CD8-positive, alpha-beta T cell (primary cell): ENCODE measurements at regions of chr1 and their contacts with region 1.

Region 1: DNA sequence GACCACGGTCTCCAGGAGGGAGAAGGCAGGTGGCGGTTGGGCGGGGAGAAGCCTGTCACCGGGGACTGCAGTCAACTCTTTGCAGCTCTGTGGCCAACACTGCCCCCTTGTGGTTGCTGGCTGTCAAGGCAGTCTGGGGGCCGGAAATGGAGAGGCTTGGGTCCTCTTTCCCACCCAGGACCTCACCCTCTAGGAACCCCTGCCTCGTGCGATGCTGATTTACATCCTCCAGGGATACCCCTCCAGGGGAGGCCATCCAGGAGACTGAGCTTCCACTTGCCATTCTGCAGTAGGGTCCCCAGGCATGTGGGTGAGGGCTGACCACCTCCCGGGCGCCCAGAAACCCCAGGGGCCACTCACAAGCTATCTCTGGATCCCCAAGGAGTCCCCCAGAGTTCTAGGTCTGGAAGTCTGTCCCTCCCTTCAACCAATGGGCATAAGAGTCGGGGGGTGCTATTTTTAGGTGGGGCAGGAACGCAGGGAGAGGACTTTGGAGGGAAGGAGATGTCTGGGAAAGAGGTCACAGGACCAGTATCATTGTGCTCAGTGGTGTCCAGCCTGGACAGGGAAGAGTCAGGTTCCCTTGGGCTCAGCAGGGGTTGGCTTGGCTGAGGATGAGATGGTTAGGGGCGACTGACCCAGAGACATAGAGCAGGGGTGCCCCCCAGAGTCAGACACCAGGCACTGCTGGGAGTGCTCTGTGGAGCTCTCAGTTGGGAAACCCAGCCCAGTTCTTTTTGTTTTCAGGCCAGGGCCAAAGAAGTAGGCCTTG is 7.1 kb upstream of the GPR61 start:
- DNase-seq: peak; percentile 83 to 97 (median 91)
- ATAC-seq: peak; percentile 90
- H3K4me3 ChIP-seq: peak overlapping the region; percentile 42 to 57
- H3K4me3 Mint-ChIP-seq: peak overlapping the region; percentile 80
- H3K27ac ChIP-seq: peak overlapping the region; percentile 17 to 52
- H3K27ac Mint-ChIP-seq: peak overlapping the region; percentile 67
- H3K4me1 ChIP-seq: peaks cover 31% of the 10 kb centered on the region
- H3K4me1 Mint-ChIP-seq: peaks cover 31% of the 10 kb centered on the region
- H3K27me3 ChIP-seq: no peaks in the 10 kb centered on the region
- H3K27me3 Mint-ChIP-seq: no peaks in the 10 kb centered on the region
- CTCF ChIP-seq: peak; percentile 88

Region 2: DNA sequence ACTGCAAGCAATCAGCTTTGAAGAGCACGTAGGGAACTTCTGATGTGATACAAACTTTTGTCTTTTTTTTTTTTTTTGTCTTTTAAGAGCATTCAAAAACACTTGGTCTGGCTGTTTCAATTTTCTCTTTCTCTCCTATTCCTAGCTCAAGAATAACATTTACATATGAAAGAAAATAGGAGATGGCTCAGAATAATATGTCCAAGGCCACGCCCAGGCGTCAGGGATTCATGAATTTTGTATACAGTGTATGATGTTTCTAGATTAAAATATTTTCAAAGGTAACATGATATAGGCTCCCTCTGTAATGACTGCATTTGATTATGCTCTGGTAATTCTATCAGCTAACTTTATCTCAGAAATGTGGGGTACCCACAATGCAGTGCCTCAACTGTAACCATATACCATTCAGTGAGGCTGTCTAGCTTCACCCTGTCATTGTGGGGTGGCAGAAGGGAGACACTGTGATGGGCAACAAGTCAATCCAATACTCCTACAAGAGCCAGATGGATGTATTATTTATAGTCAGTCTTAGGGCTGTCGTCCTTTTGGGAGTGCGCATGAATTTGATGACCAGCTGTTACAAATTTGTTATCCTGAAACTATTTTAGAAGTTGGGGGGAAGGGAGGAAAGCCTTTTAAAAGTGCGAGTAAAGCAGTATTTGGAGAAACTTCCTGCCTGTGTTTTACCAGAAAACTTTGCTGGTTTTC is 674.2 kb before region 1 on chr1:
- CTCF ChIA-PET with region 1: no interaction called
- POLR2A ChIA-PET with region 1: no interaction called
- intact Hi-C with region 1: no loop called
- DNase-seq: no peak
- ATAC-seq: no peak
- H3K4me3 ChIP-seq: no peak overlapping the region
- H3K4me3 Mint-ChIP-seq: no peak overlapping the region
- H3K27ac ChIP-seq: no peak overlapping the region
- H3K27ac Mint-ChIP-seq: no peak overlapping the region
- H3K4me1 ChIP-seq: no peaks in the 10 kb centered on the region
- H3K4me1 Mint-ChIP-seq: peaks cover 5% of the 10 kb centered on the region
- H3K27me3 ChIP-seq: peaks cover 0 to 4% of the 10 kb centered on the region in 2 experiments
- H3K27me3 Mint-ChIP-seq: peaks cover 13% of the 10 kb centered on the region
- CTCF ChIP-seq: no peak

Region 3: GRCh38 chr1:109112652-109113285 is 419.8 kb before region 1 on chr1:
- CTCF ChIA-PET with region 1: no interaction called
- POLR2A ChIA-PET with region 1: no interaction called
- intact Hi-C with region 1: loop called in 1 of 2 experiments (anchors 5 kb)
- DNase-seq: peak; percentile 81 to 94 (median 89)
- ATAC-seq: peak; percentile 56
- H3K4me3 ChIP-seq: peak overlapping the region; percentile 46 to 66
- H3K4me3 Mint-ChIP-seq: peak overlapping the region; percentile 83
- H3K27ac ChIP-seq: peak overlapping the region; percentile 34 to 48
- H3K27ac Mint-ChIP-seq: peak overlapping the region; percentile 81
- H3K4me1 ChIP-seq: peaks cover 22% of the 10 kb centered on the region
- H3K4me1 Mint-ChIP-seq: peaks cover 29% of the 10 kb centered on the region
- H3K27me3 ChIP-seq: peaks cover 0 to 4% of the 10 kb centered on the region in 2 experiments
- H3K27me3 Mint-ChIP-seq: peaks cover 2% of the 10 kb centered on the region
- CTCF ChIP-seq: peak; percentile 90

Region 4: GRCh38 chr1:109277434-109278204 is 254.9 kb before region 1 on chr1:
- CTCF ChIA-PET with region 1: interaction called, 50 read pairs
- POLR2A ChIA-PET with region 1: interaction called, 5 read pairs
- intact Hi-C with region 1: loop called in 1 of 2 experiments (anchors 1 kb)
- DNase-seq: peak in 8 of 9 experiments; percentile 31 to 74 (median 64)
- ATAC-seq: peak; percentile 75
- H3K4me3 ChIP-seq: no peak overlapping the region
- H3K4me3 Mint-ChIP-seq: no peak overlapping the region
- H3K27ac ChIP-seq: no peak overlapping the region
- H3K27ac Mint-ChIP-seq: no peak overlapping the region
- H3K4me1 ChIP-seq: peaks cover 8% of the 10 kb centered on the region
- H3K4me1 Mint-ChIP-seq: peaks cover 7% of the 10 kb centered on the region
- H3K27me3 ChIP-seq: no peaks in the 10 kb centered on the region
- H3K27me3 Mint-ChIP-seq: no peaks in the 10 kb centered on the region
- CTCF ChIP-seq: peak; percentile 79

Region 5: GRCh38 chr1:109404838-109405237 is 127.7 kb before region 1 on chr1:
- CTCF ChIA-PET with region 1: interaction called, 17 read pairs
- POLR2A ChIA-PET with region 1: no interaction called
- intact Hi-C with region 1: no loop called
- DNase-seq: peak in 2 of 9 experiments; percentile 18 to 48
- ATAC-seq: peak; percentile 42
- H3K4me3 ChIP-seq: no peak overlapping the region
- H3K4me3 Mint-ChIP-seq: no peak overlapping the region
- H3K27ac ChIP-seq: peak overlapping the region; percentile 18 to 45
- H3K27ac Mint-ChIP-seq: peak overlapping the region; percentile 58
- H3K4me1 ChIP-seq: peaks cover 4% of the 10 kb centered on the region
- H3K4me1 Mint-ChIP-seq: peaks cover 16% of the 10 kb centered on the region
- H3K27me3 ChIP-seq: no peaks in the 10 kb centered on the region
- H3K27me3 Mint-ChIP-seq: no peaks in the 10 kb centered on the region
- CTCF ChIP-seq: no peak

Region 6: GRCh38 chr1:109493805-109494539 is 38.6 kb before region 1 on chr1 and contains the start of gene CYB561D1:
- CTCF ChIA-PET with region 1: interaction called, 1,903 read pairs
- POLR2A ChIA-PET with region 1: interaction called, 132 read pairs
- intact Hi-C with region 1: loop called (anchors 1 kb)
- DNase-seq: peak; percentile 79 to 95 (median 88)
- ATAC-seq: peak; percentile 90
- H3K4me3 ChIP-seq: peak within 1 kb of the TSS; percentile 94 to 95
- H3K4me3 Mint-ChIP-seq: peak within 1 kb of the TSS; percentile 95
- H3K27ac ChIP-seq: peak within 1 kb of the TSS; percentile 53 to 58
- H3K27ac Mint-ChIP-seq: peak within 1 kb of the TSS; percentile 85
- H3K4me1 ChIP-seq: peaks cover 49% of the 10 kb centered on the region
- H3K4me1 Mint-ChIP-seq: peaks cover 52% of the 10 kb centered on the region
- H3K27me3 ChIP-seq: no peaks in the 10 kb centered on the region
- H3K27me3 Mint-ChIP-seq: no peaks in the 10 kb centered on the region
- CTCF ChIP-seq: peak; percentile 88
- total RNA-seq, gene CYB561D1: 10.2 to 12.3 TPM

Region 7: DNA sequence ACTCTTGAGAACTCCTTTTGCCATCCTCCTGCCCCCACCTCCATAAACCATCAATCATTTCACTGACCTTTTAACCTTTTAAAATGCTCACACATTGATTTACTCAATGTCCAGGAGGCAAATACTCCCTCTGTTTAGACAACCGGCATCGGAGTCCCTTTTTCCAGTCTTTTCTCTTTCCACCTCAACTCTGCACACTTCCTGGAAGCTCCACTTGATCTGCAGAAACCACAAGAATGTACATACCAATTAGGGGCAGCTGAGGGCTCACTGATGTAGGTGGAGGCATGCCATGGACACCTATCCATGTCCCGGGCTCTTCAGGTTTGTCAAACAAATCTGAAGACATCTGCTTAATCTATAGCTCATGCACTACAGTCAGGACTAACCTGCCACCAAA is 17.7 kb before region 1 on chr1:
- CTCF ChIA-PET with region 1: interaction called, 1,903 read pairs
- POLR2A ChIA-PET with region 1: interaction called, 22 read pairs
- intact Hi-C with region 1: loop called in 1 of 2 experiments (anchors 1 kb)
- DNase-seq: no peak
- ATAC-seq: no peak
- H3K4me3 ChIP-seq: no peak overlapping the region
- H3K4me3 Mint-ChIP-seq: no peak overlapping the region
- H3K27ac ChIP-seq: no peak overlapping the region
- H3K27ac Mint-ChIP-seq: no peak overlapping the region
- H3K4me1 ChIP-seq: peaks cover 22% of the 10 kb centered on the region
- H3K4me1 Mint-ChIP-seq: peaks cover 20% of the 10 kb centered on the region
- H3K27me3 ChIP-seq: no peaks in the 10 kb centered on the region
- H3K27me3 Mint-ChIP-seq: no peaks in the 10 kb centered on the region
- CTCF ChIP-seq: no peak

Region 8: DNA sequence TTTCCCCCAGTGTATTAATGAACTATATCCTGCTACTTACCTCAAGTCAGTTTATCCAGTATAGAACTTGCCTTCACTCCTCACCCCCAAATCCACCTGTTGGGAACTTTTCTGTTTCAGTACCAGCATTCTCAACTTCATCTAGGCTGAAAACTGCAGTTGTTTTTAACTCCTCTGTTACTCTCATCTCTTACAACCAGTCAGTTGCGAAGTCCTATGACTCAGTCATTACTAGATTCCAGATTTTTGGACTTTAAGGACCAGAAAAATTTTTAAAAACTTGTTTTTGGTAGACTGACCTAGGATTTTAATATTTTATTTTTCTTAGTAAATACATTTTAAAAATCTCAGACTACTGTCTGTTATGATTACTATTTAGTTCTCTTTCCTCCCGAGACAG is 24.0 kb after region 1 on chr1:
- CTCF ChIA-PET with region 1: interaction called, 12 read pairs
- POLR2A ChIA-PET with region 1: no interaction called
- intact Hi-C with region 1: no loop called
- DNase-seq: no peak
- ATAC-seq: no peak
- H3K4me3 ChIP-seq: no peak overlapping the region
- H3K4me3 Mint-ChIP-seq: no peak overlapping the region
- H3K27ac ChIP-seq: no peak overlapping the region
- H3K27ac Mint-ChIP-seq: no peak overlapping the region
- H3K4me1 ChIP-seq: peaks cover 28% of the 10 kb centered on the region
- H3K4me1 Mint-ChIP-seq: peaks cover 79% of the 10 kb centered on the region
- H3K27me3 ChIP-seq: no peaks in the 10 kb centered on the region
- H3K27me3 Mint-ChIP-seq: no peaks in the 10 kb centered on the region
- CTCF ChIP-seq: no peak